A549 (cell line): ENCODE measurements at regions of chr20 and their contacts with region 1.

Region 1: GRCh38 chr20:22974353-22974752 is 60.8 kb upstream of the SSTR4 start:
- DNase-seq: peak in 1 of 2 experiments; percentile 60
- ATAC-seq: peak in 1 of 2 experiments; percentile 71; a peak in 3 of 6 replicates
- H3K4me3 ChIP-seq: no peak overlapping the region
- H3K27ac ChIP-seq: peak overlapping the region; percentile 7 to 14; a peak in 3 of 6 replicates
- H3K4me1 ChIP-seq: 0 out of 3 replicates have a peak, but pooled peaks cover 3% of the 10 kb centered on the region
- CTCF ChIP-seq: peak; percentile 40
- EP300 ChIP-seq: no peak
- POLR2A ChIP-seq: no peak
- RAD21 ChIP-seq: peak; percentile 51 to 73; a peak in 4 of 5 replicates

Region 2: GRCh38 chr20:22617160-22617559 is 357.2 kb before region 1 on chr20:
- CTCF ChIA-PET with region 1: no interaction called
- POLR2A ChIA-PET with region 1: no interaction called
- DNase-seq: peak; percentile 80 to 84
- ATAC-seq: peak; percentile 95 to 99
- H3K4me3 ChIP-seq: no peak overlapping the region
- H3K27ac ChIP-seq: peak overlapping the region in 1 of 2 experiments; percentile 27; a peak in 3 of 6 replicates
- H3K4me1 ChIP-seq: peaks cover 25% of the 10 kb centered on the region
- CTCF ChIP-seq: no peak
- EP300 ChIP-seq: no peak
- POLR2A ChIP-seq: no peak; the same call in 1 of the 2 replicates
- RAD21 ChIP-seq: no peak

Region 3: DNA sequence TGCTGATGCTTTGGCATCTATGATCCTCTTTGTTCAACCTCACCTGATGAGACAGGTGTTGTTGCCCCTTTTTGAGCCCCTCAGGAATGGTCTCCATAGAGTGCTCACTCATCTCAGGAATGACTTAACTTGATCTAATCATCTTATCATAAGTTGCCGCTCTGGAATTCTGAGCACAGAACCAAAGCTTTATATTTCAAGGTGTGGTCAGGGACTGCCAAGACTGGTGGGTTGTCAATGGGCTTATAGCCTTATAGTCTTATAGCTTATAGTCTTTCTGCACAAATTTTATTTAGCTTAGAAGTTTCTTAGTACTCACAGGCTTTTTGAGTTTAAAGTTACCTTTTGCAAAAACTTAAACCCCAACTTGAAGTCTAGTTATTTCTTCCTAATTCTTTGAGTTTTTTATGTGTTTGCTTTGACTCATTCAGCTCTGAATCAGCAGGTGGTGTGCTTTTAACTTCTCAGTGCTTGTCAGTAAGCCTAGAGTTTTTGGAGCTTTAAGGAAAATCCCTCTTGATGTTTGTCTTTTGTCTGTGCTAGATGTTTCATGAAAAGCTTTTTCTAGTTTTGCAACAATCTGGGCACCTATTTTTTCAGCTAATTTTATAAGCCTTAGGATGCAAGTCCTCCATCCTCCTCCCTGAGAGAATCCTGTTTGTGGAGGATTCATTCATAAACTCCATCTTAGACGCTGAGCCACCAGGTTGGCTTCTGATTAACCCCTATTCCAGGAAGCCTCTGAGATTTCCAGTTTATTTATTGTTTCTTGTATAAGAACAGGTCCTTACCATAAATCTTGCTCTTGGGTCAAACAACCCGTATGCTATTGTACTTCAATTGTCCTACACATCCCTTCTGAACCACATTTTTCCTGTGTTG is 11.6 kb before region 1 on chr20:
- CTCF ChIA-PET with region 1: interaction called, 22 read pairs
- POLR2A ChIA-PET with region 1: no interaction called
- DNase-seq: peak; percentile 67 to 78
- ATAC-seq: peak; percentile 85 to 86
- H3K4me3 ChIP-seq: no peak overlapping the region
- H3K27ac ChIP-seq: peak overlapping the region; percentile 83 to 87
- H3K4me1 ChIP-seq: peaks cover 23% of the 10 kb centered on the region
- CTCF ChIP-seq: no peak
- EP300 ChIP-seq: peak; percentile 53 to 58; a peak in 2 of 5 replicates
- POLR2A ChIP-seq: no peak
- RAD21 ChIP-seq: peak; percentile 16 to 65; a peak in 4 of 5 replicates

Region 4: DNA sequence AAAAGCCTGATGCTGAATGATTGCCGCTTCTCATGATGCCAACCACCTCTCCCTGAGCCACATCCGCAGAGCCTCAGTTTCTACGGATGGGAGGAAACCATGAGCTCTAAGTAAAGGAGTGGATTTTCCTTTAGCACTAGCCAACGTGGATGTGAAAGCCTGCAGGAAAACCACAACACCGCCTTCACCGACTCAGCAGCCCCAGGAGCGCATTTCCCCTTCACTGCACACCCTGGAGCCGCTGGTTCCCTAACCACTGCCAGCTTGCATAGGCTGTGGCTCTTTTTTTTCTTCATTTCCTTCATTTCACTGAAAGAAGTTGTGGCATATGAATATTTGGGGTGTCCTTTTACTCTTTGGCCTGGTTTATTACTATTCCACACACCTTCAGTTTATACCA is 10.3 kb after region 1 on chr20:
- CTCF ChIA-PET with region 1: interaction called, 11 read pairs
- POLR2A ChIA-PET with region 1: no interaction called
- DNase-seq: no peak
- ATAC-seq: no peak
- H3K4me3 ChIP-seq: no peak overlapping the region
- H3K27ac ChIP-seq: no peak overlapping the region
- H3K4me1 ChIP-seq: no peaks in the 10 kb centered on the region
- CTCF ChIP-seq: no peak
- EP300 ChIP-seq: no peak
- POLR2A ChIP-seq: no peak
- RAD21 ChIP-seq: no peak